HepG2 (cell line): ENCODE measurements at regions of chr20 and their contacts with region 1.

Region 1: DNA sequence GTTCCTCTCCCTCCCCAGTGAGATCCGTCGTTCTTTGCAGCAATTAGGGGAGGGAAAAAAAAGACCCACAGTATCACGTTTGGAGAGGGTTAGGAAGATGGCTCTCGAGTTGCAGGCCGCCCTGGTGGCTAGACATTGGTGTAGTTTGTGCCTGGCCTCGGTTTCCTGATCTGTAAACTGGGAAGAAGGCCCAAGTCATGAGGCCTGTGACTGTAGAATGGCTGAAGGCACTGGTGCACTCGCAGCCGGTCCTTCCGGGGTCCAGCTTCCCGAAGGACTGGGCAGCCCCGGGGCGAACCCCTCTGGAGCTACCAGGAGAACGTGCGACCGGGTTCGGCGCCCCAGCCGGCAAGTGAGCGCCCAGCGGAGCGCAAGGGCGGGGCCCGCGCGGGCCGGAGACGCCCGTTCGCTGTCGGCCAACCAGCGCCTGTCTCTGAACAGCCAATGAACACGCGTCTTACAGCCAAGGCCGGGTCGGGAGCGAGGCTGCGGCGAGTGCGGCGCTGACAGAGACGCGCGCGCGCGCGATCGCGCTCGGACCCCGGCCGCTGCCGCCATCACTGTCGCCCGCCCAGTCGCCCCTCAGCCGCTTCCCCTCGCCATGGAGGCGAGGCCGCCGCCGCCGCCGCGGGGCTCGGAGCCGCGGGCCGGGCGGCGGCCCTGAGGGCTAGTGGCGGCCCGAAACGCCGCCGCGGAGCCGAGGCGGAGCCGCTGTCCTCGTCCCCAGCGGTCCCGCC is at the start of gene PTPRA:
- DNase-seq: peak; percentile 91
- ATAC-seq: peak; percentile 90
- H3K4me3 ChIP-seq: peak within 1 kb of the TSS; percentile 77 to 98 (median 92)
- H3K27ac ChIP-seq: peak within 1 kb of the TSS; percentile 49
- H3K4me1 ChIP-seq: peaks cover 63% of the 10 kb centered on the region
- H3K27me3 ChIP-seq: peaks cover 0 to 18% of the 10 kb centered on the region in 2 experiments; a peak in 3 of 5 replicates
- CTCF ChIP-seq: no peak
- EP300 ChIP-seq: no peak
- POLR2A ChIP-seq: peak; percentile 94 to 95
- RAD21 ChIP-seq: peak; percentile 58; the same call in 1 of the 2 replicates
- total RNA-seq, gene PTPRA: 43.7 and 47.2 TPM in 2 replicates

Region 2: DNA sequence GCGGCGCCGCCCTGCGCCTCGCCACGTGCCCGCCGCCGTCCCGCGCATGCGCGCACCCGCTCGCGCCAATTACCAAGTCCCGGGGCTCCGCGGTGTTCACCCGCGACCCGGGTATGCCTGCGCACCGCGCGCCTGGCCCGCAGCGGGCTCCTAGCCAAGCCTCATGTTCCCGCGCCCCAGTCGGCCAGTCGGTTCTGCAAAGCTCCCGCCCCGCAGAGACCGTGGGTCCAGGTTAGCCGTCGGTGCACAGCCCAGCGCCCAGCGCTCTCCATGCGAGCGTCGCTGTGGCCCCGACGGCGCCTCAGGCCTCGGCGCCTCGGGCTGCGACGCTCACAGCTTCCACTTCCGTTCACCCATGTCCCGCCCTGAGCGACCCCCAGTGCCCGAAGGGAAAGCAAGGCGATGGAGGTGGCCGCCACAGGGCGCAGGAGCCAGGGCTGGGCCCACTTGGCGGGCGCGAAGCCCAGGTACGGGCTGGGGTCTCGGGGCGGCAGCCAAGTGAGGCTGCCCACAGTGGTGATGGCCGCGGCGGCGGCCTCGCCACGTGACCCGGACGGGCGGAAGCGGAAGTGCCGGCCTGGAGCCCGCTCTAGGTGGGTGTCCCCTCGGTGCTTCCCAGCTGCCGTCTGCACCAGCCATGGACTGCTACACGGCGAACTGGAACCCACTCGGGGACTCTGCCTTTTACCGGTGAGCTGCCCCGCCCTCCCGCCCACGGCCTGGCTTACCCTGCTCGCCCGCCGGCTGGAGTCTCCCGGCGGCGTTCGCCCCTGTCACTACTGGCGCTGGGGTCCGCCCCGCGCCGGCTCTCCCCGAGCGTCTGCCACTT is 32.8 kb before region 1 on chr20 and contains the starts of genes PCED1A and VPS16:
- CTCF ChIA-PET with region 1: no interaction called
- POLR2A ChIA-PET with region 1: interaction called, 12 read pairs
- in situ Hi-C with region 1: no loop called
- intact Hi-C with region 1: no loop called
- DNase-seq: peak; percentile 84
- ATAC-seq: peak; percentile 99
- H3K4me3 ChIP-seq: peak within 1 kb of the TSS; percentile 71 to 97 (median 74)
- H3K27ac ChIP-seq: peak within 1 kb of the TSS; percentile 76
- H3K4me1 ChIP-seq: peaks cover 37% of the 10 kb centered on the region
- H3K27me3 ChIP-seq: no peaks in the 10 kb centered on the region; a peak in 1 of 5 replicates
- CTCF ChIP-seq: peak; percentile 18; the same call in 1 of the 2 replicates
- EP300 ChIP-seq: no peak
- POLR2A ChIP-seq: peak; percentile 89 to 93
- RAD21 ChIP-seq: peak; percentile 81
- total RNA-seq, gene PCED1A: 12.6 and 40.1 TPM in 2 replicates
- total RNA-seq, gene VPS16: 27.6 and 35.4 TPM in 2 replicates

Region 3: DNA sequence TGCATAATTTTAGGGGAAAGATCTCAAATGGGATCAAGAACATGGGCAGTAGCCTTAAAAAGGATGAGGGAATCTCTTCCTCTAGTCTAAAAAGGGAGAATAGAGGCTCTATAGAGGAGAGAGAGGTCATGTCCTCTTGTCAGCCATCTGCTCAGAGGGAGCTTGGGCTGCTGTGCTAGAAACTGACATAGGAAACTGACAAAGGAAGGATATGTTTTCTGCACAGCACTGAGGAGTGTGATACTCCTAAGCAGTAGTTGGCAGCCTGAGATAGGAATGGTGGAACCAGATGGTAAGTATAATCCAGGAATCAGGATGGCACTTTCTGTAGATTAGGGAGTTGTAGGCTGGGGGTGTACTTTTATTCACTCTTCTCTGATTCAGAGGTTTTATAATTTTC is 59.3 kb after region 1 on chr20:
- CTCF ChIA-PET with region 1: no interaction called
- POLR2A ChIA-PET with region 1: no interaction called
- in situ Hi-C with region 1: no loop called
- intact Hi-C with region 1: no loop called
- DNase-seq: no peak
- ATAC-seq: no peak
- H3K4me3 ChIP-seq: no peak overlapping the region
- H3K27ac ChIP-seq: no peak overlapping the region
- H3K4me1 ChIP-seq: no peaks in the 10 kb centered on the region
- H3K27me3 ChIP-seq: no peaks in the 10 kb centered on the region
- CTCF ChIP-seq: no peak
- EP300 ChIP-seq: no peak
- POLR2A ChIP-seq: no peak
- RAD21 ChIP-seq: no peak

Region 4: GRCh38 chr20:2946988-2947961 is 74.1 kb after region 1 on chr20:
- CTCF ChIA-PET with region 1: no interaction called
- POLR2A ChIA-PET with region 1: interaction called, 8 read pairs
- in situ Hi-C with region 1: no loop called
- intact Hi-C with region 1: loop called (anchors 10 kb)
- DNase-seq: peak; percentile 100
- ATAC-seq: peak; percentile 100
- H3K4me3 ChIP-seq: peak overlapping the region in 2 of 3 experiments; percentile 18 to 34; a peak in 3 of 6 replicates
- H3K27ac ChIP-seq: peak overlapping the region; percentile 79
- H3K4me1 ChIP-seq: peaks cover 32% of the 10 kb centered on the region
- H3K27me3 ChIP-seq: no peaks in the 10 kb centered on the region
- CTCF ChIP-seq: peak; percentile 25; the same call in 1 of the 2 replicates
- EP300 ChIP-seq: peak; percentile 93 to 96
- POLR2A ChIP-seq: peak in 1 of 2 experiments; percentile 50; a peak in 2 of 4 replicates
- RAD21 ChIP-seq: peak; percentile 59

Region 5: GRCh38 chr20:3014662-3015061 is 141.5 kb after region 1 on chr20:
- CTCF ChIA-PET with region 1: no interaction called
- POLR2A ChIA-PET with region 1: no interaction called
- in situ Hi-C with region 1: no loop called
- intact Hi-C with region 1: no loop called
- DNase-seq: no peak
- ATAC-seq: no peak
- H3K4me3 ChIP-seq: no peak overlapping the region
- H3K27ac ChIP-seq: no peak overlapping the region
- H3K4me1 ChIP-seq: no peaks in the 10 kb centered on the region
- H3K27me3 ChIP-seq: no peaks in the 10 kb centered on the region
- CTCF ChIP-seq: no peak
- EP300 ChIP-seq: no peak
- POLR2A ChIP-seq: no peak
- RAD21 ChIP-seq: no peak

Region 6: DNA sequence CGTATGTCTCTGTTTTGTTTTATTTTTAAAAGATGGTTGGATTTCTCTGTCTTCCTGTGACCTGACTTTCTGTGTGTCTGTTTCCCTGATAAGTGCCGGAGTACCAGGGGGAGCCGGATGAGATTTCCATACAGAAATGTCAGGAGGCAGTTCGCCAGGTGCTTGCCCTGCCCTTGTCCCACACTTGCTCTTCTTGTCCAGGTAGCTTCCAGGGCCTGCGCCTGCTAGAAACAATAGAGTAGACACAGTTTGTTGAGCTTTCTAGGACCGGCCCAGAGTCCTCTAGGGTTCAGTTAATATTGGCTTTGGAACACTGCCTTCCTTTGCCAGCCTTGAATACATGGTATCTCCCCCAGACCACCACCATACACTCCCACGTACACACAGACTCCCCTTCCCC is 340.0 kb after region 1 on chr20:
- CTCF ChIA-PET with region 1: no interaction called
- POLR2A ChIA-PET with region 1: no interaction called
- in situ Hi-C with region 1: no loop called
- intact Hi-C with region 1: no loop called
- DNase-seq: no peak
- ATAC-seq: no peak
- H3K4me3 ChIP-seq: no peak overlapping the region
- H3K27ac ChIP-seq: no peak overlapping the region
- H3K4me1 ChIP-seq: peaks cover 28% of the 10 kb centered on the region
- H3K27me3 ChIP-seq: peaks cover 0 to 6% of the 10 kb centered on the region in 2 experiments; a peak in 1 of 5 replicates
- CTCF ChIP-seq: no peak
- EP300 ChIP-seq: no peak
- POLR2A ChIP-seq: no peak
- RAD21 ChIP-seq: no peak

Region 7: GRCh38 chr20:3258429-3258828 is 385.3 kb after region 1 on chr20:
- CTCF ChIA-PET with region 1: no interaction called
- POLR2A ChIA-PET with region 1: no interaction called
- in situ Hi-C with region 1: no loop called
- intact Hi-C with region 1: no loop called
- DNase-seq: no peak
- ATAC-seq: peak; percentile 31; the same call in 2 of the 3 replicates
- H3K4me3 ChIP-seq: no peak overlapping the region
- H3K27ac ChIP-seq: no peak overlapping the region
- H3K4me1 ChIP-seq: no peaks in the 10 kb centered on the region
- H3K27me3 ChIP-seq: no peaks in the 10 kb centered on the region
- CTCF ChIP-seq: no peak
- EP300 ChIP-seq: no peak
- POLR2A ChIP-seq: no peak
- RAD21 ChIP-seq: no peak